GM12878 (cell line): ENCODE measurements at regions of chr1 and their contacts with region 1.

Region 1: GRCh38 chr1:162921311-162921710 is 60.3 kb upstream of the CCDC190 start:
- DNase-seq: no peak
- ATAC-seq: no peak
- H3K4me3 ChIP-seq: no peak overlapping the region
- H3K27ac ChIP-seq: no peak overlapping the region
- H3K4me1 ChIP-seq: no peaks in the 10 kb centered on the region
- H3K27me3 ChIP-seq: peaks cover 0 to 2% of the 10 kb centered on the region in 2 experiments; a peak in 2 of 4 replicates
- CTCF ChIP-seq: no peak
- EP300 ChIP-seq: no peak
- POLR2A ChIP-seq: no peak
- RAD21 ChIP-seq: no peak

Region 2: GRCh38 chr1:162899422-162900146 is 21.7 kb before region 1 on chr1:
- CTCF ChIA-PET with region 1: interaction called, 3 read pairs
- POLR2A ChIA-PET with region 1: no interaction called
- RAD21 ChIA-PET with region 1: no interaction called
- SMC1A ChIA-PET with region 1: no interaction called
- in situ Hi-C with region 1: no loop called
- intact Hi-C with region 1: loop called (anchors 1 kb)
- DNase-seq: no peak
- ATAC-seq: no peak
- H3K4me3 ChIP-seq: no peak overlapping the region
- H3K27ac ChIP-seq: no peak overlapping the region
- H3K4me1 ChIP-seq: no peaks in the 10 kb centered on the region
- H3K27me3 ChIP-seq: no peaks in the 10 kb centered on the region; a peak in 1 of 4 replicates
- CTCF ChIP-seq: no peak
- EP300 ChIP-seq: no peak
- POLR2A ChIP-seq: no peak
- RAD21 ChIP-seq: no peak